ENCODE measurements at regions of chr9 and their contacts with region 1.

Region 1: GRCh38 chr9:20043035-20043434 is 254.2 kb upstream of the SLC24A2 start:
- DNase-seq: no peak
- H3K4me3 ChIP-seq: no peak overlapping the region
- H3K27ac ChIP-seq: no peak overlapping the region
- H3K27me3 ChIP-seq: no peaks in the 10 kb centered on the region
- CTCF ChIP-seq: no peak

Region 2: GRCh38 chr9:19976226-19976625 is 66.8 kb before region 1 on chr9:
- intact Hi-C with region 1: loop called in 1 of 2 experiments (anchors 5 kb)
- DNase-seq: no peak
- H3K4me3 ChIP-seq: no peak overlapping the region
- H3K27ac ChIP-seq: no peak overlapping the region
- H3K27me3 ChIP-seq: peaks cover 0 to 48% (median 0%) of the 10 kb centered on the region in 45 donors
- CTCF ChIP-seq: no peak

Region 3: DNA sequence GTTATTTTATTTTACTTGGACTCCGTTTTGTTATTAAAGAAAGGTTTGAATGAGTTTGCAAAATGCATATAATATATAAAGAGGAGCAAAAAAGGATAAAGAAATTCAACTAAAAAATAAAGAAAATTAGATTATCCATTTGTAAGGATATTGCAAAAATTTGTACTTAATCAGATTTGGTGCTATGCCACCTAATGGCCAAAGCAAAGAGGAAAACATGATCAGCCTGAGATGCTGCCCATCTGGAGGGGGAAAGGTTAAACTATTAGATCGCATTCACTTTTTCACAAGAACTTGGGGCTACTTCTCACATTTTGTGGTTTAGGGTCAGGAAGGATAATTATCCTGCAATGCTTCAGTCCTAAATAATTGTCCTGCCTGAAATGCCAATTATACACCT is 228.7 kb after region 1 on chr9:
- intact Hi-C with region 1: no loop called
- DNase-seq: no peak
- H3K4me3 ChIP-seq: no peak overlapping the region
- H3K27ac ChIP-seq: no peak overlapping the region
- H3K27me3 ChIP-seq: peaks cover 0 to 4% (median 0%) of the 10 kb centered on the region in 45 donors
- CTCF ChIP-seq: peak in 3 of 56 donors; percentile 9 to 22 (median 16)

Measured in dorsolateral prefrontal cortex (tissue), 120 donors.